Activated CD4-positive, alpha-beta T cell treated with anti-CD3 and anti-CD28 coated beads, Interleukin-2, amount 10 ng/mL, durations not matched to agents 7 days and 5 days (primary cell): ENCODE measurements at regions of chr7 and their contacts with region 1.

Region 1: GRCh38 chr7:5766321-5766761 is 15.1 kb downstream of the RNF216 start:
- DNase-seq: no peak
- H3K4me3 Mint-ChIP-seq: no peak overlapping the region
- H3K27ac Mint-ChIP-seq: no peak overlapping the region
- H3K4me1 Mint-ChIP-seq: peaks cover 9% of the 10 kb centered on the region
- H3K27me3 Mint-ChIP-seq: no peaks in the 10 kb centered on the region

Region 2: GRCh38 chr7:5780801-5781496 is 14.6 kb after region 1 on chr7:
- CTCF ChIA-PET with region 1: interaction called, 14 read pairs
- POLR2A ChIA-PET with region 1: no interaction called
- DNase-seq: peak; percentile 38
- H3K4me3 Mint-ChIP-seq: peak overlapping the region; percentile 81
- H3K27ac Mint-ChIP-seq: peak overlapping the region; percentile 90
- H3K4me1 Mint-ChIP-seq: peaks cover 43% of the 10 kb centered on the region
- H3K27me3 Mint-ChIP-seq: no peaks in the 10 kb centered on the region

Region 3: DNA sequence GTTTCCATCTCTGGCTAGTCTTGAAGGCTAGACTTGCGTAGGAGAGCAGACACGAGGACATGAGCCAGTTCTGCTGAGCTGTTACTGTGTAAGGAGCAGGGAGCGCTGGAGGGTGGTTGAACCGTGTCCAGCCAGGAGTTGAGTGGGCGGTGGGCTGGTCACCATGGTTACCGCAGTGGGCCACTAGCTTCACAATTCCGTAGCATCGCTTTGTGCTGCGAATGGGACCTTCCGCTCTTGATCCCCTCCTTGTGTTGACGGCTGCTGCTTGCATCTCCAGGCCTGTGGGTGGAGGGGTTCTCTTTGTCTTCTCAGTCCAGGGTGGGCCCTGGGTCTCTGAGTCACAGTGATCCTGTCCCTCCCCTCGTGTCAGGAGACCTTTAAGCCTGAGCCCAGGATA is 64.9 kb after region 1 on chr7:
- CTCF ChIA-PET with region 1: no interaction called
- POLR2A ChIA-PET with region 1: no interaction called
- DNase-seq: no peak
- H3K4me3 Mint-ChIP-seq: no peak overlapping the region
- H3K27ac Mint-ChIP-seq: no peak overlapping the region
- H3K4me1 Mint-ChIP-seq: peaks cover 42% of the 10 kb centered on the region
- H3K27me3 Mint-ChIP-seq: no peaks in the 10 kb centered on the region